ENCODE measurements at regions of chr2 and their contacts with region 1.

Region 1: DNA sequence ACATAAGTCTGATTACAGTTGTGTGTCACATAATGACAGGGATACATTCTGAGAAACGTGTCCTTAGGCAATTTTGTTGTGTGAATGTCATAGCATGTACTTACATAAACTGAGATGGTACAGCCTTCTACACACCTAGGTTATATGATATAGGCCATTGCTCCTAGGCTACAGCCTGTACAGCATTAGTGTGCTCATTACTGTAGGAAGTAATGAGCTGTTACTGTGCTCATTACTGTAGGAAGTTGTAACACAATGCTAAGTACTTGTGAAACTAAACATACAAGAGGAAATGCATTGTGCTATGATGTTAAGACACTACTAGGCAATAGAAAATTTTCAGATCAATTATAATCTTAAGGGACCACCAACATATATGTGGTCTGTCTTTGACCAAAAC is 72.8 kb downstream of the UPP2 start:
- DNase-seq: no peak
- ATAC-seq: no peak
- H3K4me3 ChIP-seq: no peak overlapping the region
- H3K27ac ChIP-seq: no peak overlapping the region
- H3K4me1 ChIP-seq: no peaks in the 10 kb centered on the region
- H3K27me3 ChIP-seq: no peaks in the 10 kb centered on the region
- CTCF ChIP-seq: no peak
- EP300 ChIP-seq: no peak
- POLR2A ChIP-seq: no peak
- RAD21 ChIP-seq: no peak

Region 2: GRCh38 chr2:157971697-157972096 is 202.8 kb before region 1 on chr2:
- CTCF ChIA-PET with region 1: no interaction called
- POLR2A ChIA-PET with region 1: no interaction called
- in situ Hi-C with region 1: no loop called
- intact Hi-C with region 1: no loop called
- DNase-seq: no peak
- ATAC-seq: no peak
- H3K4me3 ChIP-seq: no peak overlapping the region
- H3K27ac ChIP-seq: no peak overlapping the region
- H3K4me1 ChIP-seq: no peaks in the 10 kb centered on the region
- H3K27me3 ChIP-seq: no peaks in the 10 kb centered on the region
- CTCF ChIP-seq: no peak
- EP300 ChIP-seq: no peak
- POLR2A ChIP-seq: no peak
- RAD21 ChIP-seq: no peak

Region 3: GRCh38 chr2:158034199-158034866 is 140.2 kb before region 1 on chr2:
- CTCF ChIA-PET with region 1: no interaction called
- POLR2A ChIA-PET with region 1: no interaction called
- in situ Hi-C with region 1: no loop called
- intact Hi-C with region 1: loop called (anchors 5 kb)
- DNase-seq: peak; percentile 74
- ATAC-seq: peak; percentile 96
- H3K4me3 ChIP-seq: no peak overlapping the region
- H3K27ac ChIP-seq: no peak overlapping the region
- H3K4me1 ChIP-seq: no peaks in the 10 kb centered on the region
- H3K27me3 ChIP-seq: peaks cover 0 to 17% of the 10 kb centered on the region in 2 experiments; a peak in 2 of 5 replicates
- CTCF ChIP-seq: peak; percentile 89
- EP300 ChIP-seq: no peak
- POLR2A ChIP-seq: no peak
- RAD21 ChIP-seq: peak; percentile 70